Activated CD4-positive, alpha-beta T cell treated with anti-CD3 and anti-CD28 coated beads, Interleukin-2, amount 10 ng/mL, durations not matched to agents 24 days and 14 days (primary cell): ENCODE measurements at regions of chr16 and their contacts with region 1.

Region 1: DNA sequence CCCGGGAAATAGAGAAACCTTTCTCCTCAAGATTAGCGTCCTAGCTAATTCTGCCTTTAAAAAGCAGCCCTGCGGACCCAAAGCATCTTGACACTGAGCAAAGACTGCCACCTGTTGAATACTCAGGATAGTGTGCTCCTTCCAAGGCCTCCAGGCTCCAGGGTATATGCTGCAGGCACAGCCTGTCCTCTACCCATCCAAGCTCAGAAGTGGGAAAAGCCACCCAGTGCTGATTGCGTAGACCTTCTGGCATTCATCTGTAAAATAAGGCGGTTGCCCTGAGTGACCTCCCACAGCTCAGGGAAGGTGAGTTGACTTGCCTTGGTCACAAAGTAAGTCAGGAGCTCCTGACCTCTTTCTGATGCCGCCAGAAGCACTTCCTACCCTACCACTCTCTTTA is 456.1 kb upstream of the DYNLRB2 start:
- DNase-seq: peak; percentile 67
- H3K4me3 Mint-ChIP-seq: no peak overlapping the region
- H3K27ac Mint-ChIP-seq: no peak overlapping the region
- H3K4me1 Mint-ChIP-seq: no peaks in the 10 kb centered on the region
- H3K27me3 Mint-ChIP-seq: peaks cover 6% of the 10 kb centered on the region

Region 2: DNA sequence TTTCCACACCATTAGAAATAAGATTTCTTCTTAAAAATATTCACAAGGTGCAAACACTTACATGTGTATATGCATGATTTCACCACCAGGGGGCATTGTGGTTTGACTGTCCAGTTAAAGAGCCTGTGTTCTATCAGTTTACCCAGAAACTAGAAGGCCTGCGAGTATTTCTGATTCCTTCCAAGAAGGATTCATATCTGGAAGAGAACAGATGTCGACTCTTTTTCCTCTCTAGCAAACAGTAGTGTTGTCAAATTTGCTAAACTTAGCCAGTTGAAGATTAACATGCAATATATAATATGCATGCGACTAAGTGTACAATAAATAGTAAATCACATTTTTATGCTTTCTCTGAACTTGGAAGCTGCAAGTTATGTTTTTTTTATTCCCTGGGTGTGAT is 1581.1 kb before region 1 on chr16:
- intact Hi-C with region 1: loop called (anchors 5 kb)
- DNase-seq: peak; percentile 85
- H3K4me3 Mint-ChIP-seq: no peak overlapping the region
- H3K27ac Mint-ChIP-seq: no peak overlapping the region
- H3K4me1 Mint-ChIP-seq: no peaks in the 10 kb centered on the region
- H3K27me3 Mint-ChIP-seq: no peaks in the 10 kb centered on the region